Left colon (tissue), 2 donors: ENCODE measurements at regions of chr2 and their contacts with region 1.

Region 1: DNA sequence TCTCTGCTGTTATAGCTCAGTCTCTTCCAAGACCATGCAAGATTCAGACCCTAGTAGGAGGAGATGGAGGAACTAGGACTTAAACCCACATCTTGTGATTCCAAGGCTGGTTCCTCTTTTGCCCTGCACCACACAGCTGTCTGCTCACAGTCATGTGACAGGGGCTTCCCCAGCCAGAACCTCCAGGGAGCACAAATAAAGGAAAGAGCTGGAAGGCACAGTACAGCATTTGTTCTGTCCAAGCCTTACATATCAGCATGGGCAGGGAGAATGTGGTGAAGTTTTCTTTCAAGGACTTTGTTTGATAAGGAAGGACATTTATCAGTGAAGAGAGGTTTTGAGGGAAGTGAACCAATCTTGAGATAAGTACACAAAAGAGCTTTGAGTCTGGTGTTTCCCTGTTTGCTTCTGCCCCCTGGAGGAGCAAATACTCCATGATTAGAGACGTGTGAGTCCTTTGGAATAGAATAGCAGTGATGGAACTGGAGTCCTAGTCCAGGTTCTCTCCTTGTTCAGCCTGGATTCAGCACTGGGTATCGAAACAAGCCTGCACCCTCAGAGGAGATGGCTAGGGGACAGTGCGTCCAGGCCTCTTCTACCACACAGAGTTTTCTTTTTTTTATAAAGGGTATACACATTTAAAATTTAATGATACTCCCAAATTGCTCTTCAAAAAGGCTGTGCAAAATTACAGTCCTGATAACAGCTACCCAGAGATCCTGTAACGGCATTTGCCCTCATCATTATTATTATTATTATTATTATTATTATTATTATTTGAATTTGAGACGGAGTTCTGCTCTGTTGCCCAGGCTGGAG is 24.6 kb upstream of the CASP10 start:
- DNase-seq: peak; percentile 68 to 80
- ATAC-seq: peak; percentile 81

Region 2: DNA sequence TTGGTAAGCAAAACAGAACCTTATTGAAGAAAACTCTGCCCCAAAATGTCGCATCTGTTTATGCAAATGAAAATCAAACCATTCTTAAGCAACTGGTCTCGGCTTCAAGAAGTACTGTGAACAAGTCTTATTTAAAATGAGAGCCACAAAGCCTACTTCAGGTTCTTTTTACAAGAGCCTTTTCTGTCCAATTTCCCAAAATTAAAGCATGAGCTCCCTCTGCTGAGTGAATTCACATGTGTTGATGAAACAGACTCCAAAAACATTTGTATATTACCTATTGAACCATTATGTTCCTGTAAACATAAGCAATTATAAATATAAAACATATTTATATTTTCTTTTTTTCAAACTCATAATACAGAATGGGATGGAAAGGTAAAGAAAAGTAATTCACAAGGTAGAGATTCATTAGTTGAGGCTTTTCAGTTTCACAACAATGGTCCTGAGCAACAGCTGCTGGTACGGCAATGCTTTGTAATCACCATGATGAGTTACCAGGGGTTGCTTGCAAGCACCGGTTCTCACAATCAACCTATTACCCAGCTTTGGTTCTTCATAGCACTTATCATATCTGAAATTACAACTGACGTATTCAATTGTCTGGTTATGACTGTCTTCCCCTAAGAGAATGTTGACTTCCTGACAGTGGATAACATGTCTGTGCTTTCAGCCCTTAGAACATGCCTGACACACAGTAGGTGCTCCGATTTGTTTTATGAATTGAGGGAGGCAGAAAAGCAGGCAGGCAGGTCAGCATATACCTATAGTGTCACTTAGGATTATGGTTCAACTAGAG is 455.0 kb before region 1 on chr2:
- intact Hi-C with region 1: no loop called
- DNase-seq: no peak
- ATAC-seq: peak; percentile 49

Region 3: DNA sequence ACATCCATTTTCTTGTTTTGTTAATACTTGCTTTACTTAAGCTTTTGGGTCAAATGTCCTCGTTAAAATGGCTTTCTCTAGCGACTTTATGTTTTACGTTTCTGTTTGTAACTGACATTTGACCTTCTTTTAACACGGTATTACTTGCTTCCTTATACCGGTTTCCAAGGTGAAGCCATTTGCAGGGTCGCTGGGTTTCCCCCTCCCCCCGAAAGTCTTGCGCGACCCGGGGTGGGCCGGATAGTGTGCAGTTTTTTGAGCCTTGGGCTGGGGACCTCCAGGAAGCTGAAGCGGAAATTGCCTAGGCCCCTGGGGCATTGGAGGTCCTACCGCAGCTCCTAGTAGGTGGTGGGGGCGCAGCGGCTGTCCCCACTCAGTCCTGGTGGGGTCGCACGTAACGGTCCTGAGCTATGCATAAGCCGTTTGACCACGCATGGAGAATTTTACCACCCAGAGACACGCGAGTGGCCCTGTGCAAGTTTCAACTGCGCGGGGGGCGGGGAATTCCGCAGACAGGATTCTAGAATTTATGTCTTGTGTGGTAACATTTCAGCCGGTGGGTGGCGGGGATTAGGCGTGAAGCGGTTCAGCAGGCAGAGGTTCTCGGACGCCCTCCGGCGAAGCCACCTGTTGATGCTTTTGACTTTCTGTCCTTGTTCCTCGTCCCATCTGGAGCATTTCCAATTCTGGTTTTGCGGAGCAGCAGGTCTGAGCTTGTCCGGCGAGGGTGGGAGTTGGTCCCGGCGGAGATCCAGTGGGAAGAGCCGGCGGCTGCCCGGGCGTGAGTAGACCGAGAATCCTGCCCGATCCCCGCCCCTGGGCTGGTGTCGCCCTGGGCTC is 40.0 kb before region 1 on chr2:
- intact Hi-C with region 1: loop called in 1 of 2 experiments (anchors 5 kb)
- DNase-seq: peak; percentile 92 to 94
- ATAC-seq: peak; percentile 51